ENCODE measurements at regions of chr15 and their contacts with region 1.

Region 1: GRCh38 chr15:69475769-69476358 is 23.2 kb downstream of the RPLP1 start:
- DNase-seq: peak; percentile 75 to 85 (median 81)
- ATAC-seq: peak; percentile 95
- H3K4me3 ChIP-seq: no peak overlapping the region
- H3K27ac ChIP-seq: no peak overlapping the region
- H3K4me1 ChIP-seq: no peaks in the 10 kb centered on the region
- H3K27me3 ChIP-seq: peaks cover 6 to 24% of the 10 kb centered on the region in 2 experiments; a peak in 4 of 5 replicates
- CTCF ChIP-seq: peak; percentile 87 to 95 (median 93)
- EP300 ChIP-seq: no peak
- POLR2A ChIP-seq: no peak
- RAD21 ChIP-seq: peak; percentile 83 to 88

Region 2: DNA sequence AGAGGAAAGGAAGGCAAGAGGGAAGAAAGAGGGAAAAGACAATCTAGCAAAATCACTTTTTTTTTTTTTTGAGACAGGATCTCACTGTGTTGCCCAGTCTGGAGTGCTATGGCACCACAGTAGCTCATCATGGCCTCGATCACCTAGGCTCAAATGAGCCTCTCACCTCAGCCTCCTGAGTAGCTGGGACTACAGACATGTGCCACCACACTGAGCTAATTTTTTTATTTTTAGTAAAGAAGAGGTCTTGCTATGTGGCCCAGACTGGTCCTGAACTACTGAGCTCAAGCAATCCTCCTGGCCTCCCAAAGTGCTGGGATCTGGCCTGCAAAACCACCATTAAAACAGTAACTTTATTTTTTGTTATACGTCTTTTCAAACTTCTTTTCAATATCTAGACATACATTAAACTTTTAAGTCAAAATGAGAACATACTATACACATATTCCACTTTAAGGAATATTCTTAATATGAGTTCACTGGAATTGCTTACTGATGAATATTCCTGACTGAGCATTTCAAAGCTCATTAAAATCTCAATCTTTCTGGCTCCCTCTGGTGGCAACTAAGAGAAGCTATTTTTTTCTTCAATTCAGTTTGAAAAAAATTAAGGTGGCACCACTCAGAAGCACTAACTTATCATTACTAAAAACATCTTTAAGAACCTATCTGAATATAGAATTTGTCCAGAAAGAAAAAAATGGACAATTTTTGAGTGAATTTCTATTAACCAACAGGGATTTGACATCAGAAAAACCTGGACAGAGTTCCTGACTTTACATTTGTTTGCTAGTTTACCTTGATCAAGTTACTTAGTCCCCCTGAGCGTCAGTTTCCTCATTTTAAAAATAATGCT is 1246.6 kb after region 1 on chr15:
- CTCF ChIA-PET with region 1: interaction called, 8 read pairs
- POLR2A ChIA-PET with region 1: no interaction called
- in situ Hi-C with region 1: no loop called
- intact Hi-C with region 1: loop called (anchors 10 kb)
- DNase-seq: peak; percentile 19 to 36 (median 23)
- ATAC-seq: peak; percentile 41; the same call in 2 of the 3 replicates
- H3K4me3 ChIP-seq: no peak overlapping the region
- H3K27ac ChIP-seq: no peak overlapping the region
- H3K4me1 ChIP-seq: no peaks in the 10 kb centered on the region
- H3K27me3 ChIP-seq: no peaks in the 10 kb centered on the region
- CTCF ChIP-seq: peak in 2 of 3 experiments; percentile 36 to 67; a peak in 4 of 6 replicates
- EP300 ChIP-seq: no peak
- POLR2A ChIP-seq: no peak
- RAD21 ChIP-seq: peak; percentile 37 to 56; a peak in 3 of 4 replicates